ENCODE measurements at regions of chr6 and their contacts with region 1.

Region 1: GRCh38 chr6:130625825-130626527 is 201.2 kb upstream of the SMLR1 start:
- DNase-seq: no peak
- H3K4me3 Mint-ChIP-seq: peak overlapping the region; percentile 7
- H3K27ac Mint-ChIP-seq: peak overlapping the region; percentile 75
- H3K4me1 Mint-ChIP-seq: peaks cover 19% of the 10 kb centered on the region
- H3K27me3 Mint-ChIP-seq: no peaks in the 10 kb centered on the region

Region 2: GRCh38 chr6:130587778-130588520 is 38.0 kb before region 1 on chr6:
- intact Hi-C with region 1: no loop called
- DNase-seq: no peak
- H3K4me3 Mint-ChIP-seq: no peak overlapping the region
- H3K27ac Mint-ChIP-seq: no peak overlapping the region
- H3K4me1 Mint-ChIP-seq: peaks cover 25% of the 10 kb centered on the region
- H3K27me3 Mint-ChIP-seq: no peaks in the 10 kb centered on the region

Region 3: GRCh38 chr6:130676077-130676772 is 50.2 kb after region 1 on chr6:
- intact Hi-C with region 1: loop called (anchors 5 kb)
- DNase-seq: no peak
- H3K4me3 Mint-ChIP-seq: no peak overlapping the region
- H3K27ac Mint-ChIP-seq: peak overlapping the region; percentile 30
- H3K4me1 Mint-ChIP-seq: peaks cover 13% of the 10 kb centered on the region
- H3K27me3 Mint-ChIP-seq: no peaks in the 10 kb centered on the region

Region 4: GRCh38 chr6:130708338-130708737 is 82.4 kb after region 1 on chr6:
- intact Hi-C with region 1: no loop called
- DNase-seq: peak; percentile 61
- H3K4me3 Mint-ChIP-seq: no peak overlapping the region
- H3K27ac Mint-ChIP-seq: no peak overlapping the region
- H3K4me1 Mint-ChIP-seq: peaks cover 9% of the 10 kb centered on the region
- H3K27me3 Mint-ChIP-seq: peaks cover 9% of the 10 kb centered on the region

Measured in activated CD4-positive, alpha-beta T cell treated with anti-CD3 and anti-CD28 coated beads, Interleukin-2, amount 10 ng/mL, durations not matched to agents 24 days and 14 days (primary cell).